Spleen (tissue), 13 donors: ENCODE measurements at regions of chr11 and their contacts with region 1.

Region 1: DNA sequence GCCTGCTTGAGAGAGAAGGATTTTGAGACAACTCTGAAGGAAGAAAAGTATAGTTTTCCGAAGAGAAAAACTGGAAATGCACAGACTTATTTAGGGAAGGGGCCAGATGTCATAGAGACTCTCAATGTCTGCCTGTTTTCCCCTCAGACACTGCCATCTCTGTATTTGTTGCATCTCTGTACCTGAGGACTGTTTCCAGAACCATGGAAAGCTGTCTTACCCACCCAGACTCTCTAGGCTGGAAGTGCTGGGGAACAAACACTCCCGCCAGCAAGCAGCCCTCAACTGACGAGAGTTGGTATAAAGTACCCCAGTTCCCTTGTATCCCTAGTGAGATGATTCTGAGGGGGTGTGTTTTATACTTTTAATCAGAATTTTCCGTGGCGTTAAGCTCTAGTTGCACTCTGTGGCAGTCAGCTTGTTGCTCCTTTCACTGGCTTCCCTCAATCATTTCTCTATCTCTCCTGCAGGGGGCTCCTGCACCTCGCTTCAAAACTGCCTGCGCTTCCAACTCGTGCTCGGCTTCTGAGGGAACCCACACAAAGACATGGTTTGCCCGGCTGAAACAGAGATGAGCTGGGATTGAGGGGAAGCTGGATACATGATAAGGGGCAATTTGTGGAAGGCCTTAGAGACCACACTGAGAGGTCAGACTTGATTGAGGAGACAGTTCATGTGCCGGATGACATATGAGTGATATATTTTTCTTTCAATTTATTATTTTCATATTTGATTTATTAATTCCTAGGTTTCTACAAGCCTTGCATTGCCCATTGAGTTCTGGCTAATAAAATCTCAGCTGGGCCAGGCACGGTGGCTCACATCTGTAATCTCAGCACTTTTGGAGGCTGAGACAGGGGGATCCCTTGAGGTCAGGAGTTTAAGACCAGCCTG is 36.9 kb upstream of the CLPB start:
- DNase-seq: peak; percentile 78
- H3K4me3 ChIP-seq: no peak overlapping the region
- H3K27ac ChIP-seq: no peak overlapping the region
- H3K4me1 ChIP-seq: peaks cover 3 to 9% (median 7%) of the 10 kb centered on the region in 6 donors
- H3K27me3 ChIP-seq: peaks cover 0 to 42% (median 0%) of the 10 kb centered on the region in 7 donors
- CTCF ChIP-seq: peak; percentile 52 to 85 (median 79)
- POLR2A ChIP-seq: no peak

Region 2: GRCh38 chr11:72144807-72145560 is 326.3 kb before region 1 on chr11:
- intact Hi-C with region 1: no loop called
- DNase-seq: no peak
- H3K4me3 ChIP-seq: no peak overlapping the region
- H3K27ac ChIP-seq: no peak overlapping the region
- H3K4me1 ChIP-seq: peaks cover 0 to 9% (median 0%) of the 10 kb centered on the region in 6 donors
- H3K27me3 ChIP-seq: no peaks in the 10 kb centered on the region
- CTCF ChIP-seq: no peak
- POLR2A ChIP-seq: no peak

Region 3: GRCh38 chr11:72378704-72379384 is 92.4 kb before region 1 on chr11:
- intact Hi-C with region 1: no loop called
- DNase-seq: no peak
- H3K4me3 ChIP-seq: no peak overlapping the region
- H3K27ac ChIP-seq: no peak overlapping the region
- H3K4me1 ChIP-seq: no peaks in the 10 kb centered on the region
- H3K27me3 ChIP-seq: no peaks in the 10 kb centered on the region
- CTCF ChIP-seq: no peak
- POLR2A ChIP-seq: no peak

Region 4: DNA sequence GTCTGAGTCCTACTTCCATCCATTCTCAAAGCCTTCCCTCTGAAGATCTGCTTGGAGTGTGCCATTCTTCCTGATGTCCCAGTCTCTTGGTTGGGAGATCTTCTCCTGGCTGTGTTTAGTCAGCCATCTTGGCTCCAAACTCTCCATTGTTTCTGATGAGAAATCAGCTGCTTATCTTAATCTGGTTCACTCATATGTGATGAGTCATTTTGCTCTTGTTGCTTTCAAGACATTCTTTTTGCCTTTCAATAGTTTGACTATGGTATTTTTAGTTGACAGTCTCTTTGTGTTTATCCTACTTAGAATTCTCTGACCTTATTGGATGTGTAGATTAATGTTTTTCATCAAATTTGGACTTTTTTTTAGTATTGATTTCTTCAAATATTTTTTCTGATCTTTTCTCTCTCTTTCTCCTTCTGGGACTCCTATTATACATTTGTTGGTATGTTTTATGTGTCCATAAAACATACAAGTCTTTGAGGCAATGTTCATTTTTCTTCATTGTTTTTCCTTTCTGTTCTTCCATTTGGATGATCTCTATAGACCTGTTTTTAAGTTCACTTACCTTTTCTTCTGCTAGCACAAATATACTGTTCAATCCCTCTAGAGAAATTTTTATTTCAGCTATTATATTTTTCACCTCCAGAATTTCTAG is 40.3 kb after region 1 on chr11:
- intact Hi-C with region 1: no loop called
- DNase-seq: no peak
- H3K4me3 ChIP-seq: no peak overlapping the region
- H3K27ac ChIP-seq: no peak overlapping the region
- H3K4me1 ChIP-seq: no peaks in the 10 kb centered on the region
- H3K27me3 ChIP-seq: no peaks in the 10 kb centered on the region
- CTCF ChIP-seq: no peak
- POLR2A ChIP-seq: no peak

Region 5: GRCh38 chr11:72683782-72684200 is 212.5 kb after region 1 on chr11:
- intact Hi-C with region 1: loop called (anchors 5 kb)
- DNase-seq: peak; percentile 91
- H3K4me3 ChIP-seq: no peak overlapping the region
- H3K27ac ChIP-seq: peak overlapping the region in 4 of 8 donors; percentile 11 to 63 (median 50)
- H3K4me1 ChIP-seq: peaks cover 0 to 81% (median 33%) of the 10 kb centered on the region in 6 donors
- H3K27me3 ChIP-seq: peaks cover 0 to 14% (median 0%) of the 10 kb centered on the region in 7 donors
- CTCF ChIP-seq: peak; percentile 88 to 96 (median 93)
- POLR2A ChIP-seq: no peak